ENCODE measurements at regions of chr7 and their contacts with region 1.

Region 1: DNA sequence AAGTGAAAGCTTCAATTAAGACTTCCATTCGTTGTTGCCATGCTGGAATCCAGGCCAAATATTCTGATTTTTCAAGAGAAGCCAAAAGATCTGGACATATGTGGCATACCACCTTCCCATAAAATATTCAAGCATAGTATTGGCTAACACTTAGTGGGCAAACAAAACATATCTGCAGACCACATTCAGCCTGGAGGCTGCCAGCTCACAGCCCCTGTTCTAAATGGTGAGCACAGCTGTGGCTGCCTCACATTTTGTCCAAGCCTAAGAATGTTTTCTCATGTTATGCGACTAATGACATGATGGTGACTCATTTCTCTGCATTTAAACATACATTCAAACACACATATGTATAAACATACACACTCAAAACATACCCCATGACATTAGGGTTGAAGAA is 10.6 kb upstream of the CALU start:
- DNase-seq: no peak
- H3K4me3 Mint-ChIP-seq: no peak overlapping the region
- H3K27ac Mint-ChIP-seq: no peak overlapping the region
- H3K4me1 Mint-ChIP-seq: no peaks in the 10 kb centered on the region
- H3K27me3 Mint-ChIP-seq: peaks cover 33% of the 10 kb centered on the region

Region 2: GRCh38 chr7:129271500-129272355 is 543.1 kb after region 1 on chr7:
- intact Hi-C with region 1: loop called (anchors 10 kb)
- DNase-seq: peak; percentile 91
- H3K4me3 Mint-ChIP-seq: peak overlapping the region; percentile 53
- H3K27ac Mint-ChIP-seq: peak overlapping the region; percentile 35
- H3K4me1 Mint-ChIP-seq: peaks cover 5% of the 10 kb centered on the region
- H3K27me3 Mint-ChIP-seq: no peaks in the 10 kb centered on the region